CD4-positive, alpha-beta memory T cell (primary cell): ENCODE measurements at regions of chr1 and their contacts with region 1.

Region 1: GRCh38 chr1:201511941-201512539 is 5.1 kb upstream of the CSRP1 start:
- DNase-seq: no peak
- H3K4me3 ChIP-seq: no peak overlapping the region
- H3K4me3 Mint-ChIP-seq: no peak overlapping the region
- H3K27ac ChIP-seq: no peak overlapping the region
- H3K27ac Mint-ChIP-seq: peak overlapping the region in 1 of 7 donors; percentile 18
- H3K4me1 ChIP-seq: peaks cover 11% of the 10 kb centered on the region
- H3K4me1 Mint-ChIP-seq: peaks cover 13 to 24% (median 20%) of the 10 kb centered on the region in 4 donors
- H3K27me3 ChIP-seq: no peaks in the 10 kb centered on the region
- H3K27me3 Mint-ChIP-seq: no peaks in the 10 kb centered on the region

Region 2: GRCh38 chr1:201399352-201400126 is 112.5 kb before region 1 on chr1:
- CTCF ChIA-PET with region 1: no interaction called
- POLR2A ChIA-PET with region 1: no interaction called
- intact Hi-C with region 1: no loop called
- DNase-seq: no peak
- H3K4me3 ChIP-seq: no peak overlapping the region
- H3K4me3 Mint-ChIP-seq: peak overlapping the region in 1 of 8 donors; percentile 41
- H3K27ac ChIP-seq: no peak overlapping the region
- H3K27ac Mint-ChIP-seq: no peak overlapping the region
- H3K4me1 ChIP-seq: no peaks in the 10 kb centered on the region
- H3K4me1 Mint-ChIP-seq: peaks cover 0 to 11% (median 6%) of the 10 kb centered on the region in 4 donors
- H3K27me3 ChIP-seq: peaks cover 10% of the 10 kb centered on the region
- H3K27me3 Mint-ChIP-seq: peaks cover 35 to 41% of the 10 kb centered on the region in 2 donors

Region 3: GRCh38 chr1:201500670-201501120 is 11.3 kb before region 1 on chr1:
- CTCF ChIA-PET with region 1: interaction called, 714 read pairs
- POLR2A ChIA-PET with region 1: interaction called, 7 read pairs
- intact Hi-C with region 1: no loop called
- DNase-seq: no peak
- H3K4me3 ChIP-seq: no peak overlapping the region
- H3K4me3 Mint-ChIP-seq: no peak overlapping the region
- H3K27ac ChIP-seq: no peak overlapping the region
- H3K27ac Mint-ChIP-seq: peak overlapping the region in 1 of 7 donors; percentile 16
- H3K4me1 ChIP-seq: peaks cover 18% of the 10 kb centered on the region
- H3K4me1 Mint-ChIP-seq: peaks cover 13 to 43% (median 22%) of the 10 kb centered on the region in 4 donors
- H3K27me3 ChIP-seq: no peaks in the 10 kb centered on the region
- H3K27me3 Mint-ChIP-seq: no peaks in the 10 kb centered on the region

Region 4: DNA sequence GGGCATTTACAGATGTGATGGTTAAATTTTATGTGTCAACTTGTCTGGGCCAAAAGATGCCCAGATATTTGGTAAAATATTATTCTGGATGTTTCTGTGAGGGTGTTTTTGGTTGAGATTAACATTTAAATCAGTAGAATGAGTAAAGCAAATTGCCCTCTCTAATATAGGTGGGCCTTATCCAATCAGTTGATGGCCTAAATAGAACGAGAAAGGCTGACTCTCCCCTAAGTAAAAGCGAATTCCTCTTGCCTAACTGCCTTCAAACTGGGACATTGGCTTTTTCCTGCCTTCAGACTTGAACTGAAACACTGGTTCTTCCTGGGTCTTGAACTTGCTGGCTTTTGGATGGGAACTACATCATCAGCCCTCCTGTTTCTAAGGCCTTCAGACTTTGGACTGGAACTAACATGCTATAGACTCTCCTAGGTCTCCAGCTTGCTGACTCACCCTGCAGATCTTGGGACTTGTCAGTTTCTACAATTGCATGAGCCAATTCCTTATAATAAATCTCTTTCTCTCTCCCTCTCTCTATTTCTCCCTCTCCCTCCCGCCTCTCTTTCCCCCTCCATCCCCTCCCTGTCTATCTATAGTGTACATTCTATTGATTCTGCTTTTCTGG is 16.7 kb after region 1 on chr1:
- CTCF ChIA-PET with region 1: interaction called, 35 read pairs
- POLR2A ChIA-PET with region 1: no interaction called
- intact Hi-C with region 1: no loop called
- DNase-seq: no peak
- H3K4me3 ChIP-seq: no peak overlapping the region
- H3K4me3 Mint-ChIP-seq: no peak overlapping the region
- H3K27ac ChIP-seq: no peak overlapping the region
- H3K27ac Mint-ChIP-seq: no peak overlapping the region
- H3K4me1 ChIP-seq: no peaks in the 10 kb centered on the region
- H3K4me1 Mint-ChIP-seq: no peaks in the 10 kb centered on the region
- H3K27me3 ChIP-seq: no peaks in the 10 kb centered on the region
- H3K27me3 Mint-ChIP-seq: peaks cover 0 to 3% of the 10 kb centered on the region in 2 donors